Right ventricle myocardium superior (tissue), 1 donor: ENCODE measurements at regions of chr1 and their contacts with region 1.

Region 1: DNA sequence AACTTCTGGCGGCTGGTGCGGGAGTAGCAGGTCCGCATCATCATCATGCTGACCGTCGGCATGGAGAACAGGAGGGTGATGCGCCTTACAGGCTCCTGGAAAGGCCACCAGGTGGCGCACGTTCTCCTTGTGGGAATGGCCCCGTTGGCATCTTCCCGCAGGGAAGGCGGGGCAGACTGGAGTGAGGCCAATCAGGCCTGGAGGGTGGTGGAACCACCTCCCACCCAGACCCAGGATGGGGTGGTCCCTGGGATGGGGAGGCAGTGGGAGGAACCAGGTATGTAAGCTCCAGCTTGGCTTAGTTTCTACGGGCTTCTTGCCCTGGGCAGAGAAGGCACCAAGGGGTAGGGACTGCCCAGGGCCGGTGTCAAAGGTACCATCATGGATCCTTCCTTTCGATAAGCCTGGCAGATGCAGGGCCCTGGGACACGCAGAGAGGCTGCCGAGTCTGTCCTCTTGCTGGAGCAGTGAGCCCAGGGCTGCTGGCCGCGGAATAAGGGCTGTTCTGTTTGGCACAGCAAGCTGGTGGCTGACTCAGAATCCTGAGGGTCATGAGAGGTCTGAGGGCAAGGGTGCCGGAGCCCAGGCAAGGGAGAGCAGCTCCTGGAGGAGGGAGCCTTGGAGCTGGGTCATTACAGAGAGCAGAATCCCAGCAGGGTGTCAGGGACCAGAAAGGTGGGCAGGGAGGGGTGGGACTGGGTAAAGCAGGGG is 8.7 kb upstream of the LGR6 start:
- DNase-seq: peak; percentile 90
- ATAC-seq: peak; percentile 67

Region 2: GRCh38 chr1:202255343-202255742 is 70.4 kb after region 1 on chr1:
- intact Hi-C with region 1: no loop called
- DNase-seq: no peak
- ATAC-seq: no peak

Region 3: DNA sequence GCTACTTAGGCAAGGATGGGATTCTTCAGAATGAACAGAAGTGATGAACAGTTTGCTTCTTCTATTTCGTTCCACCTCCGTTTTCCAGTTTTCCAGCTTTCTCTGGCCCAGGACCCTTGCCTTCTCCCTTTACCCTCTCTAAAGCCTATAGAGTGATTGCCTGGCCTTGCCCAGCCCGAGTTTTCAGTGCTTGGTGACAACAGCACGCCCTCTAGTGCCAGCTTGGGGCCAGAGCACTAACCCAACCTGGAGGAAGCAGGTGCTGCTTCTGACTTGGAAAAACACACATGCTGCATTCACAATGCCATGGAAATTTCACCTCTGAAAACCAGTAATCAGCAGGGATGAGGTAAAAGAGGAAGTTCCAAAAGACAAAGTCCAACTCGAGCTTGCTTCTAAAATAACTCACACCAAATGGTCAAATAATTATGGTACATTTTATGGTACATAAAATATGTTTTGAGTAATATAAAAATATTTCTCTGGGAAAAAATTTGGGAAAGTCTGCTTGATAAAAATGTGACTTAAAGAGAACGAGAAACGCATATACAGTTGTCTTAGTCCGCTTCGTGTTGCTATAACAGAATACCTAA is 130.8 kb after region 1 on chr1:
- intact Hi-C with region 1: loop called (anchors 5 kb)
- DNase-seq: peak; percentile 83
- ATAC-seq: peak; percentile 89

Region 4: GRCh38 chr1:202716654-202717053 is 531.7 kb after region 1 on chr1:
- intact Hi-C with region 1: loop called (anchors 5 kb)
- DNase-seq: no peak
- ATAC-seq: no peak